Activated B cell treated with CpG ODN at 0.5 μM for 24 hours (primary cell): ENCODE measurements at regions of chr3 and their contacts with region 1.

Region 1: DNA sequence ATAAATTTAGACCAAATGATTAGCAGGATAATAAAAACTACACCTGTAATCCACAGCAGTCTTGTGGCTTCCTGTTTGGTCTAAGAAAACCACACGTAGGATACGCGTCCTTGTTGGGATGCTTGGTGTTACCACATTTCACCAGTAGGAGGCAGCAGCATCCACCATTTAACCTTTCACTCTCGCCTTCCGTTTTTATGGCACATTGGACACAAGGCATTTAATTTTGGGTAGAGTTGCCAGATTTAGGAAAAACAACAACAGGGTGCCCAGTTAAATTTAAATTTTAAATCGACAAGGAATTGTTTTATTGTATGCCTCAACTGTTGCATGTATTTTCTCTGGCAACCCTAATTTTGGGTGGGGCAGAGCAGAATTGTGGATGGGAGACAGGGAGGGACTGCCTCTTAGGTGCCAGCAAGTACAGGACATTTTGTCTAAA is 6.3 kb downstream of the LRRC31 start:
- DNase-seq: peak; percentile 49
- ATAC-seq: peak; percentile 50
- H3K4me3 Mint-ChIP-seq: peak overlapping the region; percentile 19
- H3K27ac Mint-ChIP-seq: peak overlapping the region; percentile 35
- H3K4me1 Mint-ChIP-seq: peaks cover 30% of the 10 kb centered on the region
- H3K27me3 Mint-ChIP-seq: no peaks in the 10 kb centered on the region
- CTCF ChIP-seq: peak; percentile 94

Region 2: GRCh38 chr3:169764452-169765274 is 98.8 kb before region 1 on chr3 and contains the start of gene TERC:
- CTCF ChIA-PET with region 1: interaction called, 8 read pairs
- POLR2A ChIA-PET with region 1: interaction called, 5 read pairs
- intact Hi-C with region 1: loop called (anchors 1 kb)
- DNase-seq: peak; percentile 78
- ATAC-seq: peak; percentile 79
- H3K4me3 Mint-ChIP-seq: peak within 1 kb of the TSS; percentile 96
- H3K27ac Mint-ChIP-seq: peak within 1 kb of the TSS; percentile 99
- H3K4me1 Mint-ChIP-seq: peaks cover 25% of the 10 kb centered on the region
- H3K27me3 Mint-ChIP-seq: no peaks in the 10 kb centered on the region
- CTCF ChIP-seq: no peak
- total RNA-seq, gene TERC: 2.5 and 8.4 TPM in 2 replicates

Region 3: DNA sequence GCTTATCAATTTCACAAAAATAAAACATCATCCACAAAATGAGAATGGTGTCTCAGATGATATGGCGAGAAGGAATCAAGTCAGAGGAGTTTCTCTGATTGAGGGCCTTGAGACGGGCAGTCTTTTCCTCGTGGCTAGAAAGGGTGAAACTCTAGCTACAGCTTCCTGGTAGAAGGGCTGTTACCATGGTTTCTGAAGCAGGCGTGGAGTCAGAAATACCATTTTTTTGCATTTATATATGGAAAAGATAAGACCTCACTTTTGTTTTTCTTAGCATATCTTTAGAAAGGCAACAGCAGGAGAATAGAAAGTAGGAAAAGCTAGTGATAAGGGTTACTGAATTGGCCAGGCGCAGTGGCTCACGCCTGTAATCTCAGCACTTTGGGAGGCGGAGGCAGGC is 30.6 kb after region 1 on chr3:
- CTCF ChIA-PET with region 1: no interaction called
- POLR2A ChIA-PET with region 1: interaction called, 17 read pairs
- intact Hi-C with region 1: no loop called
- DNase-seq: no peak
- ATAC-seq: no peak
- H3K4me3 Mint-ChIP-seq: no peak overlapping the region
- H3K27ac Mint-ChIP-seq: no peak overlapping the region
- H3K4me1 Mint-ChIP-seq: no peaks in the 10 kb centered on the region
- H3K27me3 Mint-ChIP-seq: no peaks in the 10 kb centered on the region
- CTCF ChIP-seq: no peak

Region 4: DNA sequence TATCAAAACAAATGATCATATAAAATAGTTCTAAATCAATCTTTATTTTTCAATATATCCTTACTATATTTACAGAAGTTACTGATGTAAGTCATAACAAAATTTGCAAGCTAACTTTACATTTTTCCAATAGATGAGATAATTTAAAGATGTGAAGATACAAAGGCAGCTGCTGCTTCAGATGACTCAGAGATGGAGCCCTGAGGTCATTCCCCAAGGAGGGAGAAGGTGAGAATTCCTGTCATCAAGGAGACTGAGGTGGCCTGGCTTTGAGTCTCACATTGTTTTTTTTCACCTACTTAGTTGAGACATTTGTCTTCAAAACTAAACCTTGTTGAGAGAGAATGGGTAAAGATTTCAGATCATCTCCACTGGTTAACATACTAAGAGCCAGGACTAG is 44.0 kb after region 1 on chr3:
- CTCF ChIA-PET with region 1: no interaction called
- POLR2A ChIA-PET with region 1: no interaction called
- intact Hi-C with region 1: no loop called
- DNase-seq: no peak
- ATAC-seq: no peak
- H3K4me3 Mint-ChIP-seq: no peak overlapping the region
- H3K27ac Mint-ChIP-seq: no peak overlapping the region
- H3K4me1 Mint-ChIP-seq: no peaks in the 10 kb centered on the region
- H3K27me3 Mint-ChIP-seq: no peaks in the 10 kb centered on the region
- CTCF ChIP-seq: no peak

Region 5: GRCh38 chr3:169954142-169954756 is 90.8 kb after region 1 on chr3:
- CTCF ChIA-PET with region 1: no interaction called
- POLR2A ChIA-PET with region 1: interaction called, 12 read pairs
- intact Hi-C with region 1: no loop called
- DNase-seq: no peak
- ATAC-seq: peak; percentile 87
- H3K4me3 Mint-ChIP-seq: peak overlapping the region; percentile 69
- H3K27ac Mint-ChIP-seq: peak overlapping the region; percentile 92
- H3K4me1 Mint-ChIP-seq: peaks cover 61% of the 10 kb centered on the region
- H3K27me3 Mint-ChIP-seq: no peaks in the 10 kb centered on the region
- CTCF ChIP-seq: no peak

Region 6: GRCh38 chr3:170037463-170038433 is 174.3 kb after region 1 on chr3 and contains the start of gene GPR160:
- CTCF ChIA-PET with region 1: interaction called, 3 read pairs
- POLR2A ChIA-PET with region 1: interaction called, 5 read pairs
- intact Hi-C with region 1: loop called (anchors 1 kb)
- DNase-seq: peak; percentile 88
- ATAC-seq: peak; percentile 77
- H3K4me3 Mint-ChIP-seq: peak within 1 kb of the TSS; percentile 93
- H3K27ac Mint-ChIP-seq: peak within 1 kb of the TSS; percentile 88
- H3K4me1 Mint-ChIP-seq: peaks cover 46% of the 10 kb centered on the region
- H3K27me3 Mint-ChIP-seq: no peaks in the 10 kb centered on the region
- CTCF ChIP-seq: peak; percentile 52
- total RNA-seq, gene GPR160: 63.2 and 65.5 TPM in 2 replicates

Region 7: DNA sequence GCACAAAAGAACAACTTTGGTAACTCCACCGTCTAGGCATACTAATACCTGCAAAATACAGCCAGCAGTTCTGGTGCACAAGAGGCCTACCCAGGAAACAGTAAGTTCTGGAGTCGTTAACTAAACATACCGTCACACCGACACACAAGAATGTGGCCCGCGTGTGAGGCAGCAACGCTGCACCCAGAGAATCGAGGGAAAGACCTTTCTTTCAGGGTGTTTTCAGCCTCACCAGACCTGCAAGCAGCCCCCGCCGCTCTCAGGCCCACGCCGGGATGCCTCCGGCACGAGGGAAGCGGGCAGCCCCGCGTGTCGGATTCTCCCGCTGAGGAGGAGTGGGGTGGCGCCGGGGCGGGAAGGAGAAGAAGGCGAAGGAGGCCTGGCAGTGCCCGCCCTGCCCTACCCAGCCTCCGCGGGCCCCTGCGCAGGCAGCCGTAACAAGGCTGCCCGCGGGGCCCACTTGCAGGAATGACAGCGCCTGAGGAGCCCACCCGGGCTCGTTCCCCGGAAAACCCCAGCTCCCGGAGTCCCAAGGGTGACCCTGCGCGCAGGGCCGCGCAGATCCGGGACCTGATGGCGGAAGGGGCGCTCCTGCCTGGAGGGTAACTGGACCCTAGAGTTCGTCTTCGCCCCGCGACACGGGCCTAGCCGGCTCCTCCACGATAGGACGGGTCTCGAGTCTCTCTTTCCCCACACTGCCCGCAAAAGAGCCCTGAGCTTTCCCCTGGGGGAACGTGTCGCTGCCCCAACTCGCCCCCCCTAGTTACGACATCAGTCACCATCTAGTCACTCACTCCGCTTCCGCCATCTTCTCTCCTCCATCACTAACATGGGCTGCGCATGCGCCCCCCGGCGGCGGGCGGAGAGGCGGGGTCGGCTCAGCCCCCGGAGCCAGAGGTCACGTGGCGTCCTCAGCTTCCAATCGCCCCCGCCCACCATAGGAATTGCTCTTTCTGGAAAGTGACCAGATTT is 317.7 kb after region 1 on chr3 and contains the start of gene PHC3:
- CTCF ChIA-PET with region 1: no interaction called
- POLR2A ChIA-PET with region 1: interaction called, 3 read pairs
- intact Hi-C with region 1: loop called (anchors 10 kb)
- DNase-seq: peak; percentile 92
- ATAC-seq: peak; percentile 80
- H3K4me3 Mint-ChIP-seq: peak within 1 kb of the TSS; percentile 96
- H3K27ac Mint-ChIP-seq: peak within 1 kb of the TSS; percentile 98
- H3K4me1 Mint-ChIP-seq: peaks cover 32% of the 10 kb centered on the region
- H3K27me3 Mint-ChIP-seq: no peaks in the 10 kb centered on the region
- CTCF ChIP-seq: no peak
- total RNA-seq, gene PHC3: 105 TPM in 2 replicates